Activated CD4-positive, alpha-beta memory T cell treated with anti-CD3 and anti-CD28 coated beads for 36 hours (primary cell): ENCODE measurements at regions of chr16 and their contacts with region 1.

Region 1: DNA sequence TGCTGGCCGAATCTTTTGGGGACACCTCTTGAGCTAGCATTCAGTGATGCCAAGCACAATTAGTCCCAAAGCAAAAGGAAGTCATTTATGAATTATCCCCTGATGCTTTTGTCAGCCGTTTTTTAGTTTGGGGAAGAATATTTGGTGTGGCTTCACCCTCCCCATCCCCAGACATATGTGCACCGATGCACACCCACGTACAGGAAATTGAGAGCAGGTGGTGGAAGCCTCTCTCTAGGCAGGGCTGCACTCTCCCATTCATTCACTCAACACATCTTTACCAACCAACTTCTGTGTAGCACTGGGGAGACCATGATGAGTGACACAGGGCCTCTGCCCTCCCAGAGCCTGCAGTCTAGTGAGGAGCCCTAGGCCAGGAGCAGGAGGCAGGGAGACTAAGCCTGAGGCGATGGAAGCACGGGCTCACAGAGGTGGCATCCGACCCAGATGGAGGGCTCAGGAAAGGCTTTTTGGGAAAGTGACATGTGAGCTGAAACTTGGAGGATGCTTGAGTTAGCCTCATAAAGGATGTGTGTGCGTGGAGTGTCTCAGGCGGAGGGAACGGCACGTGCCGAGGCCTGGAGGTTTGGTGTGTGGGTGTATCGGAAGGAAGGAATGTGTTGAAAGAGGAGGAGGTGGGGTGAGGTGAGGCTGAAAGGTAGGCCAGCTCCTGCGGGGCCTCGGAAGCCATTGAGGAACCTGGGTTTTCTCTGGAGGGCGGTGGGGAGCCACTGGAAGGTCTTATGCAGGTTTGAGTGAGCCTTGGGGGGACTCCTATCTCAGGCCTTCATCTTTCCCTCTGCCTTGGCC is 43.8 kb downstream of the PSME3IP1 start:
- DNase-seq: peak; percentile 39
- H3K4me3 Mint-ChIP-seq: no peak overlapping the region
- H3K27ac Mint-ChIP-seq: peak overlapping the region; percentile 81
- H3K4me1 Mint-ChIP-seq: peaks cover 31% of the 10 kb centered on the region
- H3K27me3 Mint-ChIP-seq: no peaks in the 10 kb centered on the region

Region 2: DNA sequence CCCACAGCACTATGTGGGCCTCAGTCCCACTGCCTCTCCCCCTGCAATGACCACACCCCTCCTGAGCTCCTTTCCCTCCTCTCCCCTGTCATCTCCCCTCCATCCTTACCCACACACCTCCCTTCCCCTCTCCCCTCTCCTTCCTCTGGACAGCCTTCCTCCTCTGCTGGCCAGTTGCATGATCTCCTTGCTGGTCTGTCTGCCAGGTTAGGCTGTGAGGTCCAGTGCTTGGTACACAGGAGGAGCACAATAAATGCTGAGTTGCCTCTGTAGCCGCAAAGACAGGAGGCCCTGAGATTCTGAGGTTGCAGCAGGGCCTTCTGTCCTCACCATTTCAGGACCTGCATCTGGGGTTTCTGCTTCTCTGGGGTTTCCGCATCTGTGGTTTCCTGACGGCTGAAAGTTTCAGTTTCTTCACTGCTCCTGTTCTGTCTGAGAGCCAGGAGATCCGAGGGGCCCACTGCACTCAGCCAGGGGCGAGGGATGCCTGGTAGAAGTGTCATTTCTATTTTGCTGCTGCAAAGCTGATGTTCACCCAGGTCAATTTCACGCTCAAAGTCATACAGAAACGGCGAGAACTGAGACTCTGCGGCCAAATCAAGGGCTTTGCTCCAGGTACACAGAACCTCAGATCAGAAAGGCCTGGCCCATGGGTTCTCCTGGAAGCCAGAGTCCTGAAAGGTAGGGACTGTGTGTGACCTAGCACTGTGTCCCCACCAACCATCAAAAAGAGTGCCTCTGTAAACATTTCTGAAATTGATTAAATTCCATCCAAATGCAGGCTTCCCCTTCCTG is 281.6 kb before region 1 on chr16:
- CTCF ChIA-PET with region 1: no interaction called
- POLR2A ChIA-PET with region 1: no interaction called
- intact Hi-C with region 1: no loop called
- DNase-seq: peak; percentile 81
- H3K4me3 Mint-ChIP-seq: peak overlapping the region; percentile 33
- H3K27ac Mint-ChIP-seq: peak overlapping the region; percentile 67
- H3K4me1 Mint-ChIP-seq: peaks cover 40% of the 10 kb centered on the region
- H3K27me3 Mint-ChIP-seq: no peaks in the 10 kb centered on the region

Region 3: GRCh38 chr16:57128771-57129389 is 13.1 kb before region 1 on chr16:
- CTCF ChIA-PET with region 1: no interaction called
- POLR2A ChIA-PET with region 1: interaction called, 4 read pairs
- intact Hi-C with region 1: loop called (anchors 2 kb)
- DNase-seq: peak; percentile 76
- H3K4me3 Mint-ChIP-seq: peak overlapping the region; percentile 33
- H3K27ac Mint-ChIP-seq: peak overlapping the region; percentile 74
- H3K4me1 Mint-ChIP-seq: peaks cover 70% of the 10 kb centered on the region
- H3K27me3 Mint-ChIP-seq: no peaks in the 10 kb centered on the region

Region 4: GRCh38 chr16:57235128-57236021 is 93.3 kb after region 1 on chr16:
- CTCF ChIA-PET with region 1: no interaction called
- POLR2A ChIA-PET with region 1: no interaction called
- intact Hi-C with region 1: no loop called
- DNase-seq: peak; percentile 75
- H3K4me3 Mint-ChIP-seq: no peak overlapping the region
- H3K27ac Mint-ChIP-seq: peak overlapping the region; percentile 79
- H3K4me1 Mint-ChIP-seq: peaks cover 12% of the 10 kb centered on the region
- H3K27me3 Mint-ChIP-seq: no peaks in the 10 kb centered on the region